Naive thymus-derived CD8-positive, alpha-beta T cell (primary cell): ENCODE measurements at regions of chr3 and their contacts with region 1.

Region 1: DNA sequence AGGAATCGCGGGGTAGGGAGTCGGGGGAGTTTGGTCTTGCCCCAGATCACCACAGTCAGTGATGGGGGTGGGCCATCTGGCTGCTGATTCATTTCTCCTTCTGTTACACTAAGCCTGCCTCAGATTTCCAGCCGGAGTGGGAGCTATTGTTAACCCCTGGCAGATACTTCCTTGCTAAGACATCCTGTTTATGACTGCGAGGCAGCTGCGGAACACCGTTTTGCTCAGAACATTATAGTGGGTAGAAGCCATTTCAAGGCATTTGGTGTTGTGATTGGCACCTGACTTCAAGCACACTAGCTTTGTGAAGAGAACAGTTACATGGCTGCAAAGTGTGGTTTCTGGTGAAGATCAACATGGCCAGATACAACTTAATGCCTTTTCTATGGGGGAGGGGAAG is 73.8 kb downstream of the FLNB start:
- DNase-seq: peak in 9 of 10 donors; percentile 4 to 79 (median 54)
- ATAC-seq: peak; percentile 91 to 94
- H3K4me3 Mint-ChIP-seq: peak overlapping the region; percentile 58 to 86 (median 72)
- H3K27ac Mint-ChIP-seq: peak overlapping the region; percentile 84 to 97 (median 93)
- H3K4me1 Mint-ChIP-seq: peaks cover 38 to 75% (median 65%) of the 10 kb centered on the region in 4 donors
- H3K27me3 Mint-ChIP-seq: no peaks in the 10 kb centered on the region

Region 2: DNA sequence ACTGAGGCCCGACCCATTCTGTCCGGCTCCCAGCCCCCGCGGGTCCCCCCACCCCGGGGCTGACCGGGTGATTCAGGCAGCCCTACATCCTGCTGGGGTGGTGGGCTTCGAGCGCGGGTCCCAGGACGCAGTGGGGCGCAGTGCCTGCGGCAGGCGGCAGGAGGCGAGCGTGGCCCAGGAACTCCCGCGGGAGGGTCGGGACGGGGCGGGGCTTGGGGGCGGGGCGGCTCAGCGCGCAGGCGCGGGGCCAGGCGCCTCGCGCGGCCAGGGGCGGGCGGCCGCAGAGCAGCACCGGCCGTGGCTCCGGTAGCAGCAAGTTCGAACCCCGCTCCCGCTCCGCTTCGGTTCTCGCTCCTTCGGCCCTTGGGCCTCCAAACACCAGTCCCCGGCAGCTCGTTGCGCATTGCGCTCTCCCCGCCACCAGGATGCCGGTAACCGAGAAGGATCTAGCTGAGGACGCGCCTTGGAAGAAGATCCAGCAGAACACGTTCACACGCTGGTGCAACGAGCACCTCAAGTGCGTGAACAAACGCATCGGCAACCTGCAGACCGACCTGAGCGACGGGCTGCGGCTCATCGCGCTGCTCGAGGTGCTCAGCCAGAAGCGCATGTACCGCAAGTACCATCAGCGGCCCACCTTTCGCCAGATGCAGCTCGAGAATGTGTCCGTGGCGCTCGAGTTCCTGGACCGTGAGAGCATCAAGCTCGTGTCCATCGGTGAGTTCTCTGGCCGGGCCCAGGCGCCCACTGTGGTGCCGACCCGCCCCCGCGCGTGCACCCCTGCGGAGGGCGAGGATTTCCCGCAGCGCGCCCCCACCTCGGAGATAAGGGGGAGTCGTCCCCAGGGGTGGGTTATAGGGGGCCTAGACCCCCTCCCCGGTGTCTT is 73.7 kb before region 1 on chr3 and contains the start of gene FLNB:
- POLR2A ChIA-PET with region 1: interaction called, 24 read pairs
- DNase-seq: peak; percentile 69 to 89 (median 80)
- ATAC-seq: peak; percentile 72 to 73
- H3K4me3 Mint-ChIP-seq: peak within 1 kb of the TSS; percentile 84 to 96 (median 90)
- H3K27ac Mint-ChIP-seq: peak within 1 kb of the TSS; percentile 34 to 94 (median 89)
- H3K4me1 Mint-ChIP-seq: peaks cover 19 to 44% (median 38%) of the 10 kb centered on the region in 4 donors
- H3K27me3 Mint-ChIP-seq: no peaks in the 10 kb centered on the region
- polyA plus RNA-seq, gene FLNB: 11.8 to 32.2 (median 24.4) TPM

Region 3: GRCh38 chr3:58101499-58102389 is 19.7 kb after region 1 on chr3:
- POLR2A ChIA-PET with region 1: interaction called, 18 read pairs
- DNase-seq: peak in 1 of 10 donors; percentile 24
- ATAC-seq: peak; percentile 42 to 53
- H3K4me3 Mint-ChIP-seq: peak overlapping the region in 8 of 10 donors; percentile 34 to 82 (median 66)
- H3K27ac Mint-ChIP-seq: peak overlapping the region in 8 of 10 donors; percentile 13 to 86 (median 59)
- H3K4me1 Mint-ChIP-seq: peaks cover 24 to 53% (median 42%) of the 10 kb centered on the region in 4 donors
- H3K27me3 Mint-ChIP-seq: no peaks in the 10 kb centered on the region

Region 4: DNA sequence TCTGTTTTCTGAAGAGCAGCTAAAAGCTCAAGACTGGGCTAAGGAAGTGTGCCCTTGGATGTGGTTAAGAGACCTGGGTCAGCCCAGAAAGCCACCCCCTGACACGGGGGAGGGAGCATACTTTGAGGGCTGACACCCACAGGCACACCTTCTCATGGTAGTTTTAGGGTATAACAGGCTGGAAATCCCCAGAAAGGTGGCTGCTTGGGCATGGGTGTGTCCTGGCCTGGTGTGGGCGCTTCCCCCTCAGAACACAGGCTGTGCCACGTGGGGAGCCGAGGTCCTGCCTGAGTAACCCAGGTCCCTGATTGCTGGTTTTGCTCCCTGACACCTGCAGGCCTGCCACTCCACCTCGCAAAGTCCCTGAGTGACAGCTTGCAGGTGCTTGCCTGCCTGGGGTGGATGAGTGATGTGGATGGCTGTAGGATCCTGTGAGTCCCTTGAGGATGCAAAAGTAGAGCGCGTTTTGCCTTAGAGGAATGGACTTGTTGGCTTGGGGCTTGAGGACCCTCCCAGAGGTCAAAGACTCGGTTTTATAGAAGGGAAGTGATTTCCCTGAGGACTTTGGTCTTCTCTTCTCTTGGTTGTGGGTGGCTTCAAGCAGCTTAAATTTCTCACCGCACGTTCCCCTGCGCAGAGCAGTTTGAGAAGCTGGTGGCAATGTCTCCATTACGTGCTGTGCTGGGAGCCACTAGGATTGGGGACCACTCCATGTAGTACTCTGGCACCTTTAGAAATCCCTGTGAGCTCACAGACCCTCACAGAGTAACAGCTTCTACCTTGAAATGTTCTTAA is 34.3 kb after region 1 on chr3:
- POLR2A ChIA-PET with region 1: interaction called, 14 read pairs
- DNase-seq: peak; percentile 40 to 91 (median 78)
- ATAC-seq: peak; percentile 92 to 95
- H3K4me3 Mint-ChIP-seq: peak overlapping the region; percentile 16 to 83 (median 64)
- H3K27ac Mint-ChIP-seq: peak overlapping the region; percentile 86 to 97 (median 92)
- H3K4me1 Mint-ChIP-seq: peaks cover 27 to 61% (median 56%) of the 10 kb centered on the region in 4 donors
- H3K27me3 Mint-ChIP-seq: no peaks in the 10 kb centered on the region